ENCODE measurements at regions of chr9 and their contacts with region 1.

Region 1: GRCh38 chr9:81964218-81965171 is 21.2 kb downstream of the SPATA31D3 start:
- DNase-seq: no peak
- ATAC-seq: no peak
- H3K4me3 ChIP-seq: no peak overlapping the region
- H3K4me3 Mint-ChIP-seq: no peak overlapping the region
- H3K27ac ChIP-seq: no peak overlapping the region
- H3K27ac Mint-ChIP-seq: no peak overlapping the region
- H3K4me1 ChIP-seq: no peaks in the 10 kb centered on the region
- H3K4me1 Mint-ChIP-seq: no peaks in the 10 kb centered on the region
- H3K27me3 ChIP-seq: no peaks in the 10 kb centered on the region
- H3K27me3 Mint-ChIP-seq: peaks cover 0 to 6% of the 10 kb centered on the region in 2 donors

Region 2: DNA sequence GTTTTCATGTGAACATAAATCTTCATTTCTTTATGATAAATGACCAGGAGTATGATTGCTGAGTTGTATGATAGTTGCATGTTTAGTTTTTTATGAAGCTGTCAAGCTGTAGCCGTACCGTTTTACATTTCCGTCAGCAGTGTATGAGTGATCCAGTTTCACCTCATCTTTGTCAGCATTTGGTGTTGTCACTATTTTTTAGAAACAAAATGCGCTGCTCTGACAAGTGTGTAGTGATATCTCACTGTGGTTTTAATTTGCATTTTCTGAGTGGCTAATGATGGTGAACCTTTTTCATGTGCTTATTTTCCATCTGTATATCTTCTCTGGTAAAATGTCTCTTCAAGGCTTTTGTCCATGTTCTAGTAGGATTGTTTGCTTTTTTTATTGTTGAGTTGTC is 17.4 kb after region 1 on chr9:
- CTCF ChIA-PET with region 1: no interaction called
- POLR2A ChIA-PET with region 1: interaction called in 1 of 2 experiments, 15 read pairs
- DNase-seq: no peak
- ATAC-seq: no peak
- H3K4me3 ChIP-seq: no peak overlapping the region
- H3K4me3 Mint-ChIP-seq: no peak overlapping the region
- H3K27ac ChIP-seq: no peak overlapping the region
- H3K27ac Mint-ChIP-seq: no peak overlapping the region
- H3K4me1 ChIP-seq: no peaks in the 10 kb centered on the region
- H3K4me1 Mint-ChIP-seq: no peaks in the 10 kb centered on the region
- H3K27me3 ChIP-seq: no peaks in the 10 kb centered on the region
- H3K27me3 Mint-ChIP-seq: no peaks in the 10 kb centered on the region

Region 3: GRCh38 chr9:82313697-82314450 is 349.4 kb after region 1 on chr9:
- CTCF ChIA-PET with region 1: no interaction called
- POLR2A ChIA-PET with region 1: no interaction called
- DNase-seq: no peak
- ATAC-seq: no peak
- H3K4me3 ChIP-seq: no peak overlapping the region
- H3K4me3 Mint-ChIP-seq: no peak overlapping the region
- H3K27ac ChIP-seq: no peak overlapping the region
- H3K27ac Mint-ChIP-seq: no peak overlapping the region
- H3K4me1 ChIP-seq: no peaks in the 10 kb centered on the region
- H3K4me1 Mint-ChIP-seq: no peaks in the 10 kb centered on the region
- H3K27me3 ChIP-seq: no peaks in the 10 kb centered on the region
- H3K27me3 Mint-ChIP-seq: no peaks in the 10 kb centered on the region